PC-3 (cell line): ENCODE measurements at regions of chr3 and their contacts with region 1.

Region 1: DNA sequence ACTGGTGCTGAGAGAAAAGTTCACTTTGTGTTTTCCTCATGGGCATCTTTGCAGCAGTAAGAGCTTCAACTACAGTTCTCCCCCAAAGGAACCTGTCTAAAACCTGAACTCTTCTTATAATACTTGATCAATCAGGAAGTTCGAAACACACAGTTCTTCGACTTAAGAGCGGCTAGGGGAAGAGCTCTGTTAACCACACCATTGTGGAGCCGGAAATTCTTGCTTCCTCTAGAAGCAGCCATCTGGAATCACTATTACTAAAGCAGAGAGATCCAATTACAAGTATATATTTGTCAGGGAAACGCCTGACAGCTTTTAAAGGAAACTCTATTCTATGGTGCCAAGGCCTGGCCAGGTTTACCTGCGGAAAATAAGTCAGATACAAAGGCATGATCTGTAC is 337.3 kb upstream of the CBLB start:
- DNase-seq: peak; percentile 14
- ATAC-seq: no peak
- H3K4me3 ChIP-seq: no peak overlapping the region
- H3K27ac ChIP-seq: no peak overlapping the region
- H3K4me1 ChIP-seq: no peaks in the 10 kb centered on the region; the same call in 1 of the 2 replicates
- H3K27me3 ChIP-seq: no peaks in the 10 kb centered on the region
- CTCF ChIP-seq: no peak

Region 2: GRCh38 chr3:106013971-106014370 is 192.2 kb before region 1 on chr3:
- CTCF ChIA-PET with region 1: no interaction called
- POLR2A ChIA-PET with region 1: no interaction called
- intact Hi-C with region 1: loop called (anchors 5 kb)
- DNase-seq: peak; percentile 98
- ATAC-seq: peak; percentile 97
- H3K4me3 ChIP-seq: no peak overlapping the region
- H3K27ac ChIP-seq: peak overlapping the region; percentile 95
- H3K4me1 ChIP-seq: peaks cover 22% of the 10 kb centered on the region
- H3K27me3 ChIP-seq: no peaks in the 10 kb centered on the region
- CTCF ChIP-seq: no peak

Region 3: GRCh38 chr3:106119614-106120082 is 86.5 kb before region 1 on chr3:
- CTCF ChIA-PET with region 1: no interaction called
- POLR2A ChIA-PET with region 1: no interaction called
- intact Hi-C with region 1: loop called (anchors 5 kb)
- DNase-seq: peak; percentile 34
- ATAC-seq: no peak
- H3K4me3 ChIP-seq: no peak overlapping the region
- H3K27ac ChIP-seq: peak overlapping the region; percentile 58
- H3K4me1 ChIP-seq: peaks cover 75% of the 10 kb centered on the region
- H3K27me3 ChIP-seq: no peaks in the 10 kb centered on the region
- CTCF ChIP-seq: no peak

Region 4: DNA sequence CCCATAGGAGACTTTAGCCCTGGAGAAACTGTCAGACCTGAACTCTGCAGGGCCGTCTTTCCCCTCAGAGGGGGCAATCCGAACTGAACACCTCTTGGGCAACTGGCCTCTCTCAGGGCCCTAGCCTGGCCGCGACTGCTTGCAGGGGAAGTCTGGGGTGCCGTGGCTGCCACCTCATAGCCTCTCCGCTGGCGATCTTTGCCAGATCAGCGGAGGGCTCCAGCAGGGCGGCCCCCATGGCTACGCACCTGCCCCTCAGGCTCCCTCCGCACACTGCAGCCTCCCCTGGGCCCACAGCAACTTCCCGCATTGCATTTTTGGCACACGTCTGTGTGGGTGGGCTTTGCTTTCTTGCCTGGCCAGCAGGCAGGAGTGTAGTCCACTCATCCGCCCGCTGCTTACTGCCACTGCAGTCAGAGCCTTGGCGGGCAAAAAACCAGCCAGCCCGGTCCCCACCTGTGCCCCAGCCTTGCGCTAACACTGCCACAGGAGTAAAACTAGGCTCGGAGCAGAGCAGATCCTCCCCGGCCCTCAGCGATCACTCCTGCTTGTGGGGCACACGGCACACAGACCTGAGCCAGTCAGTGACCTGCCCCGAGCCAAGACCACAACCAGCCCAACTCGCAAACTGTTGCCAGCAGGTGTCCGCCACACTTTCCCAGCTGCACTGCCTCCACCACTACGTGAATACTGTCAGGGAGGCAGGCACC is 70.5 kb before region 1 on chr3:
- CTCF ChIA-PET with region 1: no interaction called
- POLR2A ChIA-PET with region 1: no interaction called
- intact Hi-C with region 1: no loop called
- DNase-seq: no peak
- ATAC-seq: no peak
- H3K4me3 ChIP-seq: no peak overlapping the region
- H3K27ac ChIP-seq: no peak overlapping the region
- H3K4me1 ChIP-seq: peaks cover 16% of the 10 kb centered on the region
- H3K27me3 ChIP-seq: no peaks in the 10 kb centered on the region
- CTCF ChIP-seq: no peak